ENCODE measurements at regions of chr12 and their contacts with region 1.

Region 1: DNA sequence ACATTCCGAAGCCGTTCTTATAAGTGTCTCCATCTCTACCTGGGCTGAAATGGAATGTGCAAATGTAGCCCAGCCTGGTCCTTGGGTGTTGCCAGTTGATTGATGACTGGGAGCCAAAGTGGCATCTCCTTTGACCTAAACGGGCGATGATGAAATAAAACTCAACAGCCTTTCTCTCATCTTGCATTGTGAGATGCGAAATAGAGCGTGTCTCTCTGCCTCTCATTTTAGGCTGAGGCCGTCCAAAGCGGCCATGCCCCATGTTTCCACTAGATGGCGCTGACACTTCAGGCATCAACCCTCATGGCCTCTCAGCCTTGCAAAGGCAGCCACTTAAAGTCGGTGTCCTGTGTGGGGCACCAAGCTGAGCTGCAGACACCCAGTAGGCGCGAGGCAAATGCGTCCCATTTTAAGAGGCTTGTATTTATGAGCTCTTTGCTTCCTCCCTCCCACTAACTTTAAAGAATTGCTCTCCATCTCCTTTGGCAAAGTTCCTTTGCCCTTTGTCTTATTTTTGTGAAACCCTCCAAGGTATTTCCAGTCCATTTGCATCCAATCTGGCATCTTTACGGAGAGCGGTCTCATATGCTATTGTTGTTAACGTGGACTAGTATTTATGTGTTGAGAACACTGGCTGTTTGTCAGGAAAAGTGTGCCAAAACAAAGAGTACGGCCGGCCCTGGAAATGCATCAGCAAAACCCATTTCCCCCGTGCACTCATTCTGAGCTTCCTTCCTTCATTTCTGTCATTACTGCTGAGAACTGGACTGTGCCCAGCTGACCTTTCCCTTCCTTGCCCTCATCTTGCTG is 25.0 kb downstream of the GPRC5A start:
- DNase-seq: peak; percentile 90
- ATAC-seq: peak; percentile 99
- H3K4me3 Mint-ChIP-seq: no peak overlapping the region
- H3K27ac Mint-ChIP-seq: no peak overlapping the region
- H3K4me1 Mint-ChIP-seq: peaks cover 10% of the 10 kb centered on the region
- H3K27me3 Mint-ChIP-seq: peaks cover 17% of the 10 kb centered on the region

Region 2: DNA sequence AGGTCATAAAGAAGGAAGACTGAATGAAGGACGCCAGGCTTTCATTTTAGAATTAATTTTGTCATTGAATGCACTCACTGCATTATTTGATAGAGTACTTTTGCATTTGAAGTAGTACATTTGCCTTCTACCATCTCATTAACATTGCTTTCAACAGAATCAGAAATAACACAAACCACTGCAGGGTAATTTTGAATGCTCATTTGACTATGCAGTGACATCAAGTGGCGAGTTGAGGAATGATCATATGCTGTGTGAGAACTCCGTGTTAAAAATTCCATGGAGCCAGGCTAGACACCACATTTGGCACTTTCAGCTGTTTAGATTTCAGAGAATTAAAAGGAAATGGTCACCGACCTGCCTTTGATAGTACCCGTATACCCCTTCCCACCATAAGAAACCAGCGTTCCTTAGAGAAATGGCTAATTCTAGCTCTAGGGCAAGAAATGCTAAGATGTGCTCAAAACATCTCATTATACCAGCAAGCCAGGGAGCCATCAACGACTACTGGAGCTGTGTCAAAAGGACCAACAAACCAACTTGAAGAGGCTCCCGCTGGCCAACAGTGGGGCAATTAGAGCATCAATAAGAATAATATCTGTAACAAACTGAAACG is 67.2 kb after region 1 on chr12:
- CTCF ChIA-PET with region 1: interaction called, 36 read pairs
- POLR2A ChIA-PET with region 1: interaction called, 3 read pairs
- DNase-seq: no peak
- ATAC-seq: no peak
- H3K4me3 Mint-ChIP-seq: no peak overlapping the region
- H3K27ac Mint-ChIP-seq: no peak overlapping the region
- H3K4me1 Mint-ChIP-seq: no peaks in the 10 kb centered on the region
- H3K27me3 Mint-ChIP-seq: no peaks in the 10 kb centered on the region

Measured in activated CD8-positive, alpha-beta T cell treated with anti-CD3 and anti-CD28 coated beads, Interleukin-2, amount 10 ng/mL, durations not matched to agents 7 days and 5 days (primary cell).